ENCODE measurements at regions of chr4 and their contacts with region 1.

Region 1: GRCh38 chr4:16140520-16141249 is 56.9 kb upstream of the PROM1 start:
- DNase-seq: peak in 1 of 2 donors; percentile 83
- H3K4me3 ChIP-seq: no peak overlapping the region
- H3K27ac ChIP-seq: peak overlapping the region; percentile 44 to 62
- H3K4me1 ChIP-seq: peaks cover 0 to 9% of the 10 kb centered on the region in 2 donors
- H3K27me3 ChIP-seq: no peaks in the 10 kb centered on the region
- CTCF ChIP-seq: no peak

Region 2: DNA sequence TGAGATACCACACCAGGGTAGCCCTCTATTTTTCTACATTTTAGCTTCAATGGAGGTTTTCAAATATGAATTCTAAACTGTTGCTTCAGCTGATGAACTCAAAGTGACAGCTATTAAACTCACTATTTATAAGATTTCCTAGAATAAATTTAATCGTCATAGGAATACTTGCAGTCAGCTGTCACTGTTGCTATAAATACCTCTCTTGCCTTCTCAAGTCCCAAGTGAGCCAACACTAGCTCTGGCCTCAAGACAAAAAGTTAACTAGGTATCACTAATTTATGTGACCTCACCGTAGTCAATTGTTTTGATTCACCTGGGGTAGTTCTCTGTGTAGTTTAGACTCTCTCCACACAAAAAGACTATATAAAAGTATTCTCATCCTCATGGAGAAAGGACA is 22.6 kb before region 1 on chr4:
- intact Hi-C with region 1: loop called (anchors 2 kb)
- DNase-seq: no peak
- H3K4me3 ChIP-seq: no peak overlapping the region
- H3K27ac ChIP-seq: no peak overlapping the region
- H3K4me1 ChIP-seq: peaks cover 0 to 6% of the 10 kb centered on the region in 2 donors
- H3K27me3 ChIP-seq: no peaks in the 10 kb centered on the region
- CTCF ChIP-seq: no peak

Measured in ascending aorta (tissue), 2 donors.